Mucosa of descending colon (tissue), 3 donors: ENCODE measurements at regions of chr16 and their contacts with region 1.

Region 1: GRCh38 chr16:78353610-78354275 is 254.3 kb downstream of the WWOX start:
- DNase-seq: no peak
- ATAC-seq: peak; percentile 33
- H3K4me3 ChIP-seq: no peak overlapping the region
- H3K4me1 ChIP-seq: no peaks in the 10 kb centered on the region
- CTCF ChIP-seq: no peak

Region 2: DNA sequence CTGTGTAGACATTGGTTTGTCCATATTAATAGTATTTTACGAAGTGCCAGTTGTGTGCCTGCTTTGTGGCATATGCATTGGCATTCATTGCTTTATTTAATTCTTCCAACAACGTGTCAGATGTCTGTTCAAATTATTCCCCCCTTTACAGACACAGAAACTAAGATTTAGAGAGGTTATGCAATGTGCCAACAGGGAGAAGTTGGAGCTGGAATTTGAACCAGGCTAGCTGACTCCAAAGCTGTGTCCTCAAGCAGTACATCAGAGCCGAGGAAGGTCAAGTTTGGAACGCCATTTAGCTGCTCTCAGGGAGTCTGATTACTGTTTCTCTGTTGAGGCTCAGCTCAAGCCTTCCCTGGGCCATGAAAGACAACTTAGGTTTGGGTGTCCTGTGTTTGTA is 22.0 kb before region 1 on chr16:
- intact Hi-C with region 1: loop called in 1 of 2 experiments (anchors 2 kb)
- DNase-seq: no peak
- ATAC-seq: no peak
- H3K4me3 ChIP-seq: no peak overlapping the region
- H3K4me1 ChIP-seq: no peaks in the 10 kb centered on the region
- CTCF ChIP-seq: no peak